HEK293 (cell line): ENCODE measurements at regions of chr2 and their contacts with region 1.

Region 1: DNA sequence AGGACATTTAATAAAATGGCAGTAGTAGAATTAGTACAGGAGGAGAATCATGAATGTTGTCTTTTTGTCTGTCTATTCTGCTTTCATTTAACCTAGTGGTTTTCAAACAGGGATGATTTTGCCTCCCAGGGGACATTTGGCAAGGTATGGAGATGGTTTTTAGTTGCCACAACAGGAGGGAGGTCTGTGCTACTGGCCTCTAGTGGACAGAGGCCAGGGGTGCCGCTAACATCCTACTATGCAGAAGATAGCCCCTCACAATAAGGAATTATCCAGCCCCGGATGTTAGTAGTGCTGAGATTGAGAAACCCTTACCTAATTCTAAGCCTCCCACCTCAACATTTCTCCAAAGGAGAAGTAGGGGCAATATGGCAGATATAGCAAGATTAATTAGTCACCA is 18.3 kb downstream of the FASTKD2 start:
- H3K4me3 ChIP-seq: no peak overlapping the region
- H3K27ac ChIP-seq: no peak overlapping the region
- H3K4me1 ChIP-seq: no peaks in the 10 kb centered on the region
- CTCF ChIP-seq: no peak

Region 2: GRCh38 chr2:206586609-206587008 is 197.1 kb before region 1 on chr2:
- CTCF ChIA-PET with region 1: no interaction called
- POLR2A ChIA-PET with region 1: no interaction called
- H3K4me3 ChIP-seq: no peak overlapping the region
- H3K27ac ChIP-seq: no peak overlapping the region
- H3K4me1 ChIP-seq: no peaks in the 10 kb centered on the region
- CTCF ChIP-seq: no peak

Region 3: DNA sequence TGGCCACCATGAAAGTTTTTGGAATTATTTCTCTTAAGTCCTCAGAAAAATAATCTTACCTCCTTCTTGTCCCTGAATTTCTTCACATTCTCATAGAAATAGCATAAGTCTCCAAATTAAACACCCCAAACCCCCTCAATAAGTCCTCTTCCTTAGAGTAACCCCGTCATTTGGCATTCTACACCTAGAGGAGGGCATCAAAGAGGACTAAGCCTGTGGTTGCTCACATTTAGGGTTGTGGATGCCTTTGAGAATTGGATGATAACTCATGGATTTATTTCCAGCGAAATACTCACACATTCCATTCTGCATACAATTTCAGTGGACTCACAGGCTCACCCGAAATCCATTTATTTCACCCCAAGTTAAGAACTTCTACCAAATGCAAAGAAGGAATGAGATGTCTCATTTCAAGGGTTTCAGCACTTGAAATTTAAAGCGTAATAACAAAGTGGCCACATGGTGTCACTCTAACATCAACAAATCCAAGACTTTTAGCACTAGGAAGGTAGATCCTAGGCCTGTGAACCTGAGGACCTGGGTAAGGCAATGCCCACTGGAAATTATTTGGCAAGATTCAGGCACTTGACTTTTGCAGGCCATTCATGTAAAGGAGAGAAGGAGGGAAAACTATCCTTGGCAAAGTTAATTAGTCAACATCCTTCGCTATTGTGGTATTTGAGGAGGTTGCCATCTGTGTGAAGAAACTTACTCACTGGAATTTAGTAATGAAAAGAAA is 90.2 kb before region 1 on chr2:
- CTCF ChIA-PET with region 1: interaction called, 15 read pairs
- POLR2A ChIA-PET with region 1: no interaction called
- H3K4me3 ChIP-seq: no peak overlapping the region
- H3K27ac ChIP-seq: no peak overlapping the region
- H3K4me1 ChIP-seq: no peaks in the 10 kb centered on the region
- CTCF ChIP-seq: peak; percentile 45; the same call in 1 of the 2 replicates

Region 4: GRCh38 chr2:206765242-206766056 is 18.3 kb before region 1 on chr2 and contains the starts of genes FASTKD2 and MDH1B:
- CTCF ChIA-PET with region 1: interaction called, 12 read pairs
- POLR2A ChIA-PET with region 1: no interaction called
- H3K4me3 ChIP-seq: peak within 1 kb of the TSS; percentile 92
- H3K27ac ChIP-seq: peak within 1 kb of the TSS; percentile 26; the same call in 1 of the 2 replicates
- H3K4me1 ChIP-seq: no peaks in the 10 kb centered on the region
- CTCF ChIP-seq: no peak

Region 5: DNA sequence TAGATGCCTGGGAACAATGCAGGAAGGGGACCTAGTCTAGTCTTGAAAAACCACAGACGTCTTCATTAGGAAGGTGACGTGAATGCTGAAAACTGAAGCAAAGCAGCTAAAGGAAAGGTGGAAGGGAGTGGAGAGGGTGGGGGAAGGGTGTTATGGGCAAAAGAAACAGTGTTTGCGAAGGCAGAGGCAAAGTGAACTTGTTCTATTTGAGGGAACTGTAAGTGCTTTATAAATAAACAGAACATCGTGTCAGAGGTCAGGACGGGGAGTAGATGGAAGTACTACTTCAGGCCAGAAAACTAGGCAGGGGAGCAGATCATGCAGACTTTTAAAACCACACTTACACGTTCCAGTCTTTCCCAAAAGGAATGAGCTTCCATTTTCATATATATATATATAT is 39.5 kb after region 1 on chr2:
- CTCF ChIA-PET with region 1: no interaction called
- POLR2A ChIA-PET with region 1: no interaction called
- H3K4me3 ChIP-seq: no peak overlapping the region
- H3K27ac ChIP-seq: no peak overlapping the region
- H3K4me1 ChIP-seq: no peaks in the 10 kb centered on the region
- CTCF ChIP-seq: no peak